Endothelial cell of umbilical vein (primary cell): ENCODE measurements at regions of chr3 and their contacts with region 1.

Region 1: GRCh38 chr3:131381444-131382291 is at the start of gene NUDT16:
- DNase-seq: peak; percentile 99
- H3K4me3 ChIP-seq: peak within 1 kb of the TSS; percentile 76 to 85 (median 77)
- H3K27ac ChIP-seq: peak within 1 kb of the TSS; percentile 58
- H3K4me1 ChIP-seq: peaks cover 34% of the 10 kb centered on the region
- H3K27me3 ChIP-seq: no peaks in the 10 kb centered on the region
- CTCF ChIP-seq: no peak
- POLR2A ChIP-seq: peak; percentile 89
- total RNA-seq, gene NUDT16: 28.5 and 29.7 TPM in 2 replicates

Region 2: DNA sequence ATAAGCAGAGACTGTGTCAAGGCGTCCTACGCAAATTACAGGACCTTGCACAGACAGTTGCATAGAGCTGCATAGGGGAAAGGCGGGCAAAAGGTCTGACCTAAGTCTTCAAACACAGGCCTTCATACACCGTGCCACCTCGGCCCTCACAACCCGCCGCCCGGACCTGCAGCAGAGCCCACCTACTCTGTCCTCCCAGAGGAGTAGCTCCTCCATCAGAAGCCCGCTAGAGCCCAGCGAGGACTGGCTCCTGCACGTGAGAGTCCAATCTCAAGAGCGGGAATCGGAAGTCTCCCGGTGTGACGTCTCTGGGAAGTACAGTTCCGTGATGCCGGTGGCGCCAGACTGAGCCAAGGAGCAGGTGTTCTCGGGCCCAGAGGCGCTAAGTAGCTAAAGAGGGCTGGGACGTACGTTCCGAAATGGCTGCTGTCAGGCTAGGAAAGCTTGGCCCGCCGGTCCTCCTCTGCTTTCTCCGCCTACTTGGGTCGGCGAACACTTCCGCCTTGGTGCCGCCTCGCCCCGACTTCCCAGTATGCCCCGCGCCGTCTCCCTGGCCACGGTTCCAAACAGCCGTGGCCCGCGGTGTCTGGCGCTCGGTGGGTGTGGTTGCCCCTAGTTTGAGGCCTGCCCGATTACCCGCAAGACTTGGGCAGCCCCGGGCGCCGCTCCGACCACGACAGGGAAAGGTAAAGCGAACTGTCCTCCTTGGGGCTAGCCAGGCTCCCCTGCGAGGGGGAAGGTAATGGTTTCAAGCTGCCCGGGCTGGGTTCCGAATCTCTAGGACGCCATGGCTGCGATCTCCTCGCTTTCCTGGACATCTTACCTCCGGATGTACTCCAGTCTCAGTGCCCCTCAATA is 355.1 kb before region 1 on chr3 and contains the starts of genes ASTE1 and NEK11:
- CTCF ChIA-PET with region 1: no interaction called
- POLR2A ChIA-PET with region 1: no interaction called
- dilution Hi-C with region 1: no loop called
- intact Hi-C with region 1: loop called (anchors 2 kb)
- DNase-seq: peak; percentile 84
- H3K4me3 ChIP-seq: peak within 1 kb of the TSS; percentile 44 to 72 (median 54)
- H3K27ac ChIP-seq: peak within 1 kb of the TSS; percentile 91
- H3K4me1 ChIP-seq: peaks cover 15% of the 10 kb centered on the region
- H3K27me3 ChIP-seq: no peaks in the 10 kb centered on the region
- CTCF ChIP-seq: no peak
- POLR2A ChIP-seq: peak; percentile 88
- total RNA-seq, gene ASTE1: 5.8 and 6.7 TPM in 2 replicates
- total RNA-seq, gene NEK11: 3.1 and 4.3 TPM in 2 replicates

Region 3: GRCh38 chr3:131349946-131350347 is 31.7 kb before region 1 on chr3:
- CTCF ChIA-PET with region 1: interaction called, 5 read pairs
- POLR2A ChIA-PET with region 1: interaction called, 4 read pairs
- dilution Hi-C with region 1: no loop called
- intact Hi-C with region 1: loop called (anchors 1 kb)
- DNase-seq: no peak
- H3K4me3 ChIP-seq: no peak overlapping the region
- H3K27ac ChIP-seq: peak overlapping the region; percentile 58
- H3K4me1 ChIP-seq: peaks cover 47% of the 10 kb centered on the region
- H3K27me3 ChIP-seq: no peaks in the 10 kb centered on the region
- CTCF ChIP-seq: no peak
- POLR2A ChIP-seq: no peak

Region 4: DNA sequence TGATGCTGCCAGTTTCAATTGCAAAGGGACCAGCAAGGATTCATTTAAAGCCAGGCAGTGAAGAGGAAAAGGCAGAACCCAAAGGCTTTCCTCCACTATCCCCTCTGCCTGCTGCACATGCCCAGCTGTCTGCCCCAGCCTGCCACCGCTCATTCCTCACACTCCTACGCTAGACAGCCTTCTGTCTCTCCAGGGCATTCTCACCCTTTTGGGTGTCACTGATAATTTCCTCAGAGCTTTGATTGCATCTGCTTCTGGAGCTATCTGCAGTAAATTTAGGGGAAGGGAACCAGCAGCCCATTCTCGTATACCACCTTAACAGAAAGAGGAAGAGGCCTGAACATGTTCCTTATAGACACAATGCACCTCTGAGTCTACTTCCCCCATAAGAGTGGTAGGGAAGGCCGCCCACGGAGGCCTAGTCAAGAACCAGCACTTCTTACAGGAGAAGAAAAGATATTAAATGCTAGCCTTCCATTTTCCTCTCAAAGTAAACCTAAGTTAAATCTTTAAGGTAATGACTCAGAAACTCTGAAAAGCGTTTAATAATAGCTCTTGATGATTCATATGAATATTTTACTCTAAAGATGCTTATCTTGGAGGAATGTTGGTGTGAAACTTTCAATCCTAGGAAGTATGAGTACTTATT is 20.8 kb after region 1 on chr3:
- CTCF ChIA-PET with region 1: no interaction called
- POLR2A ChIA-PET with region 1: interaction called, 11 read pairs
- dilution Hi-C with region 1: no loop called
- intact Hi-C with region 1: loop called (anchors 1 kb)
- DNase-seq: peak; percentile 87
- H3K4me3 ChIP-seq: no peak overlapping the region
- H3K27ac ChIP-seq: peak overlapping the region; percentile 87
- H3K4me1 ChIP-seq: peaks cover 24% of the 10 kb centered on the region
- H3K27me3 ChIP-seq: no peaks in the 10 kb centered on the region
- CTCF ChIP-seq: no peak
- POLR2A ChIP-seq: no peak

Region 5: GRCh38 chr3:131502530-131503245 is 121.0 kb after region 1 on chr3 and contains the start of gene MRPL3:
- CTCF ChIA-PET with region 1: no interaction called
- POLR2A ChIA-PET with region 1: interaction called, 3 read pairs
- dilution Hi-C with region 1: no loop called
- intact Hi-C with region 1: loop called (anchors 2 kb)
- DNase-seq: peak; percentile 67
- H3K4me3 ChIP-seq: peak within 1 kb of the TSS; percentile 65 to 85 (median 85)
- H3K27ac ChIP-seq: peak within 1 kb of the TSS; percentile 62
- H3K4me1 ChIP-seq: peaks cover 32% of the 10 kb centered on the region
- H3K27me3 ChIP-seq: no peaks in the 10 kb centered on the region
- CTCF ChIP-seq: no peak
- POLR2A ChIP-seq: peak; percentile 56
- total RNA-seq, gene MRPL3: 68.2 and 68.8 TPM in 2 replicates

Region 6: GRCh38 chr3:132416807-132417694 is 1035.4 kb after region 1 on chr3 and contains the start of gene DNAJC13:
- CTCF ChIA-PET with region 1: no interaction called
- POLR2A ChIA-PET with region 1: no interaction called
- dilution Hi-C with region 1: no loop called
- intact Hi-C with region 1: loop called (anchors 10 kb)
- DNase-seq: peak; percentile 96
- H3K4me3 ChIP-seq: peak within 1 kb of the TSS; percentile 87 to 100 (median 89)
- H3K27ac ChIP-seq: peak within 1 kb of the TSS; percentile 59
- H3K4me1 ChIP-seq: peaks cover 20% of the 10 kb centered on the region
- H3K27me3 ChIP-seq: no peaks in the 10 kb centered on the region
- CTCF ChIP-seq: no peak
- POLR2A ChIP-seq: no peak
- total RNA-seq, gene DNAJC13: 64.0 and 71.7 TPM in 2 replicates